ENCODE measurements at regions of chr1 and their contacts with region 1.

Region 1: GRCh38 chr1:34865981-34866761 is 6.6 kb upstream of the SMIM12 start:
- DNase-seq: peak; percentile 95
- ATAC-seq: peak; percentile 82
- H3K4me3 Mint-ChIP-seq: peak overlapping the region; percentile 72
- H3K27ac Mint-ChIP-seq: peak overlapping the region; percentile 80
- H3K4me1 Mint-ChIP-seq: peaks cover 29% of the 10 kb centered on the region
- H3K27me3 Mint-ChIP-seq: peaks cover 1% of the 10 kb centered on the region

Region 2: DNA sequence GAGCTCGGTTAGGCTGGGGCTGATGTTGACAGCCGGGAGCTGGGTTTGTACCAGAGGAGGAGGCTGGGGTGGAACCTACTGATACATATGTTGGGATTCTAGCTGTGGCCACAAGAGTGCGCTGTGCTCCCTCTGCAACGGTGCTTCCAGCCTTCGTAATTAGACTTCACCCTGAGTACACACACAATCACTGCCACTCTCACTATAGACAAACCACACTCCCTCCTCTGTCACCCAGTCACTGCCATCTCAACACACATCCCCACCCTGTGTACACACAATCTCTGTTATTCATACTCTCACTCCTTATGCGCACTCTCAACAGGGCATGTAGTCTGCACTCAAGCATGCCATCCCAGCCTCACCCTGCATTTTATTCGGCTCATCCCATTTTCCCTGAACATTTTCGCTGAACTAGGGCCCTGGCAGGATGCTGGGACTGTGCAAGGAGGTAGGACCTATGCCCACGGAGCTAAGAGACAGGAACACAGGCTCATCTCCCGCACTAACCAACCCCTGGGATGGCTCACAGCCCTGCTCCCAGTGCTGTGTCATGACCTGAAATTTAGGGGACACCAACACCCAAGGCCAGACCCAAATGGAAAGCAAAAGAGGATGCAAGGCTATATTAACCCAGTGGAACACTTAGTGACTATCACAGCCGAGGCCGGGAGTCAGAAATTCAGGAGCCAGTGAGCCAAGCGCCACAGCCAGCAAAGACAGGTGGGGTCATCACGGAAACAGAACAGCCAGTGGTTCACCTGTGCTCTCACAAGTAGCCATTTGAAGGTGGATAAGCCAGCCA is 79.4 kb before region 1 on chr1:
- CTCF ChIA-PET with region 1: interaction called, 4 read pairs
- POLR2A ChIA-PET with region 1: no interaction called
- intact Hi-C with region 1: loop called in 1 of 2 experiments (anchors 1 kb)
- DNase-seq: peak; percentile 85
- ATAC-seq: peak; percentile 87
- H3K4me3 Mint-ChIP-seq: no peak overlapping the region
- H3K27ac Mint-ChIP-seq: no peak overlapping the region
- H3K4me1 Mint-ChIP-seq: peaks cover 11% of the 10 kb centered on the region
- H3K27me3 Mint-ChIP-seq: peaks cover 30% of the 10 kb centered on the region

Region 3: DNA sequence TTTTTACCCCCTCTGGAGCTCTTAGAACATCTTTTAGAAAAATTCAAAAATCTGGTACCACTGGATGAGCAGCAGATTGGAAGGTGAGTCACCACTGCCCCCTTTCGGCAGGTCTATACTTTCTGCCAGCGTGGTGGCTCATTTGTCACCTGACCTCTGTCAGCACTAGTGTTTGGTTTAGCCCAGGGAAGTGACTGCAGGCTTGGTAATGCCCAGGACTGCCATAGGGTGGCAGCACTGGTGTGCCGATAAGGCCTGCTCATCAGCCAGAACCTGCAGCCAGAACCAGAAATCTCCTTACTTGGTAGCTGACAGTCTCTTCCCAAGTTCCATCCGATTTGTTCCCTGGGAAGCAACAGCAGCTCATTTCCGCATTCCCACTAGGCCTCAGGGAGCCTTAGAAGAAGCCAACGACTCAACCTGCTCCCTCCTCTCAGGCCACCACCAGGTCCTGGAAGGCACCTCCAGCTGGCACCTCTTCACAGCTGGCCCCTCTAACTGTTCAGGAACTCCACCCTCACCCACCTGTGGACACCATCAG is 13.4 kb before region 1 on chr1:
- CTCF ChIA-PET with region 1: interaction called, 50 read pairs
- POLR2A ChIA-PET with region 1: interaction called, 3 read pairs
- intact Hi-C with region 1: loop called (anchors 1 kb)
- DNase-seq: peak; percentile 95
- ATAC-seq: peak; percentile 100
- H3K4me3 Mint-ChIP-seq: no peak overlapping the region
- H3K27ac Mint-ChIP-seq: peak overlapping the region; percentile 34
- H3K4me1 Mint-ChIP-seq: peaks cover 17% of the 10 kb centered on the region
- H3K27me3 Mint-ChIP-seq: no peaks in the 10 kb centered on the region

Region 4: DNA sequence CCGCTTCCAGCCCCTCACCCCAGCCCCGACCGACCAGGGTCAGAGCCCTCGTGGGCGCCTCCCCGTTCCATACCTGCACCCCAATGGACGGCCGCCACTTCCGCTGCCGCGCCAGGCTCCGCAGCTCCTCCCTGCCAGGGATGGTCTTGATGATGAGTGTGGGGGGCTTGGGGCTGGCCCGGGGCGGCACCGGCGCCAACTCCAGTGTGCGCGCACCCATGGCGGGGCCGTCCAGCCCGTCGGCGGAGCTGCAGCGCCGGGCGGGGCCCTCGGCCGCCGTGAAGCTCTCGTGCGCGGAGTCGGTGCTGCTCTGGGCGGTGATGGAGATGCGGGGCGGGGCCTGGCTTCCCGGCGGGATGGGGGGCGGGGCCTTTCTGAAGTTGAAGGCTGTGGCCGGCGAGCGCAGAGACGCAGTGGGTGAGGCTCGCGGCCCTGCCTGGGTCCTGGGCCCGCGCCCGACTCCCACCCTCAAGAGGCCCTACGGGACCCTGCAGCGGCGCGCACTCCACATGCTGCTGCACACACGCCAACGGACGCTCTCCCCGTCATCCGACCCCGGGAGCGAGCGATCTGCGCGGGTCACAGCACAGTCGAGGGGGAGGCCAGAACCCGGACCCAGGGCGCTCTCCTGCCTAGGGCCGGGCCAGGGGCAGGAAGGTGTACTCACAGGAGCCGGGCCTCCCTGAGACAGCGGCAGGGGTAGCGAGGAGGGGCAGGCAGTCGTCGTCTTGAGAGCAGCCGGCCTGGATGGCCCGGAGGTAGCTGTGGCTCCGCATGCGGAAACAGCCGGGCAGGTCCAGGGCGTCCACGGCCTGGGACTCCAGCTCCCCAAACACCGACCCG is 19.5 kb after region 1 on chr1:
- CTCF ChIA-PET with region 1: interaction called, 8 read pairs
- POLR2A ChIA-PET with region 1: interaction called, 3 read pairs
- intact Hi-C with region 1: loop called in 1 of 2 experiments (anchors 1 kb)
- DNase-seq: peak; percentile 80
- ATAC-seq: peak; percentile 94
- H3K4me3 Mint-ChIP-seq: peak overlapping the region; percentile 50
- H3K27ac Mint-ChIP-seq: no peak overlapping the region
- H3K4me1 Mint-ChIP-seq: peaks cover 3% of the 10 kb centered on the region
- H3K27me3 Mint-ChIP-seq: peaks cover 26% of the 10 kb centered on the region

Region 5: GRCh38 chr1:35715568-35716002 is 849.4 kb after region 1 on chr1:
- CTCF ChIA-PET with region 1: no interaction called
- POLR2A ChIA-PET with region 1: no interaction called
- intact Hi-C with region 1: loop called in 1 of 2 experiments (anchors 5 kb)
- DNase-seq: peak; percentile 90
- ATAC-seq: peak; percentile 61
- H3K4me3 Mint-ChIP-seq: peak overlapping the region; percentile 37
- H3K27ac Mint-ChIP-seq: no peak overlapping the region
- H3K4me1 Mint-ChIP-seq: peaks cover 31% of the 10 kb centered on the region
- H3K27me3 Mint-ChIP-seq: no peaks in the 10 kb centered on the region

Region 6: GRCh38 chr1:36155408-36156328 is 1289.5 kb after region 1 on chr1 and contains the start of gene MAP7D1:
- CTCF ChIA-PET with region 1: no interaction called
- POLR2A ChIA-PET with region 1: no interaction called
- intact Hi-C with region 1: loop called in 1 of 2 experiments (anchors 5 kb)
- DNase-seq: peak; percentile 92
- ATAC-seq: peak; percentile 57
- H3K4me3 Mint-ChIP-seq: peak within 1 kb of the TSS; percentile 88
- H3K27ac Mint-ChIP-seq: peak within 1 kb of the TSS; percentile 90
- H3K4me1 Mint-ChIP-seq: peaks cover 68% of the 10 kb centered on the region
- H3K27me3 Mint-ChIP-seq: no peaks in the 10 kb centered on the region
- total RNA-seq, gene MAP7D1: 122 to 133 TPM